Vagina (tissue), 2 donors: ENCODE measurements at regions of chr12 and their contacts with region 1.

Region 1: DNA sequence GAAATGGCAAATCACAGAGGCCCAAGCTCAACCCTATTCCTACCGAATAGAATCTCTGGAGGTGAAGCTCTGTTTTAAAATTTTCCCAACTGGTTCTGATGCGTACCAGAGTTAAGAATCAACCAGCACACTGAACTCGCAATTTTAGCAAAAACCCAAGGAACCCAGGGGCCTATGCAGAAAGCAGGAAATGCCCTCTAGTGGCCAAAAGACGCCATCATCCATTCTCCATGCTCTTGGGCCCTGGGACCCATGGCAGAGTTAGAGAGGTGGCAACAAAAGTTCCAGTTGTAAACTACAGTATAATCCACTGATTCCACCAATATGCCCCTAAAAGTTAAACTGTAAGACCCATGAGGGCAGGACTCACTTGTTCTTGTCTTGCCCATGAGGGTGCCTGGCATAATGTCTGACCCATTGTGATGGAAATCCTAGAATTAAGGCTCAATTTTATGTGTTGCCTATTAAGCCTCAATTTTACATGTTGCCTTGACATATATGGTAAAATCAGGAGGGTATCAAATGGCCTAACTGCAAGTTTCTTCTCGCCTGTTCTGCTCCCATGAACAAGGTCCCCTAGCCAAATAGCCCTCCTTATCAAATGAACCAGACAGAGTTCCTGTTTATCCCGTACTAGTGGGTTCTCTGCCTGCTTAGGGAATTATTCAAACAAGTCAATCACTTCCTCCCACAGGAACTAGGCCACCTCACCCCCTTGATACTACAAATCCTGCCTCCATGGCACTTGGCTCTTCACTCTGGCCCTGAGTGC is 137.5 kb upstream of the CPM start:
- DNase-seq: no peak
- H3K4me3 ChIP-seq: no peak overlapping the region
- H3K27ac ChIP-seq: no peak overlapping the region
- H3K4me1 ChIP-seq: no peaks in the 10 kb centered on the region
- H3K27me3 ChIP-seq: no peaks in the 10 kb centered on the region
- CTCF ChIP-seq: peak; percentile 56 to 87 (median 69)
- POLR2A ChIP-seq: no peak

Region 2: DNA sequence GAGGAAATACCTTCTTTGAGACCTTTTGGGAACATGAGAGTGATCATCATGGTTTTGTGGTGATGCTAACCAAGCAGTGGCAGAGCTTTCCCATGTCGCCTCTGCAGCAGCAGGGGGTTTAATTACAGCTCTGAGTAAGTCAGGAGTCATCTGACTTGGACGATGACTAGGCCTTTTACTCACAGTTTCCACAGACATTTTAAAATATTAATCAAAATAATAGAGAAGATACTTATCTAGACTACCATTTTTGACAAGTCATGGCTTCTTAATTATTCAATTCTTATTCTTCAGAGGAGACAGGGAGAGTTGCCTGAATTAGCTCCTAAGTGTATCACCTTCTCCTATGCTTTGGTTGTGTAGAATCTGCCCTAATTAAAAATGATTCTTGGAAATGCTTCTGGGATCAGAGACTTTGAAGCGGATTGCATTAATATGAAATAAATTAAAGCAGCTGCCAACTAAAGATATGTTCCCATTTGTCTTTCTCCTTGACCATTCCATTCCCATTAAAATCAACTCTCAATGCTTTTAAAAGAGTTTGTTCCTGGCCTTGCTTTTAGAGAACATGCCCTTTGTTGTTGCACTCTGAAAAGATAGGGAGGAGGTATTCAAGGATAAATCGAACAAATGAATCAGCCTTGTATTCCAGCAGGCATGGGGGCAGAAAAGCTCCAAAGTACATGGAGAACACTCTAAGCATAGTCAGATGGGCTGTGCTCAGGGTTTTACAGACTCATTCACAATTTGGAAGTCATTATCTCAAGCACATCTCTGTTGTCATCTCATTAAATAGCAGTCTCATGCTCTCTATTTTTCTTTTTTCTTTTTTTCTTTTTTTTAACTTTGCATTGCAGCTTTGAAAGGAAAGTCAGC is 1089.0 kb before region 1 on chr12:
- intact Hi-C with region 1: no loop called
- DNase-seq: no peak
- H3K4me3 ChIP-seq: no peak overlapping the region
- H3K27ac ChIP-seq: no peak overlapping the region
- H3K4me1 ChIP-seq: no peaks in the 10 kb centered on the region
- H3K27me3 ChIP-seq: no peaks in the 10 kb centered on the region
- CTCF ChIP-seq: no peak
- POLR2A ChIP-seq: no peak

Region 3: GRCh38 chr12:68899251-68899771 is 171.2 kb before region 1 on chr12:
- intact Hi-C with region 1: loop called (anchors 10 kb)
- DNase-seq: no peak
- H3K4me3 ChIP-seq: no peak overlapping the region
- H3K27ac ChIP-seq: no peak overlapping the region
- H3K4me1 ChIP-seq: peaks cover 5% of the 10 kb centered on the region
- H3K27me3 ChIP-seq: no peaks in the 10 kb centered on the region
- CTCF ChIP-seq: no peak
- POLR2A ChIP-seq: no peak

Region 4: DNA sequence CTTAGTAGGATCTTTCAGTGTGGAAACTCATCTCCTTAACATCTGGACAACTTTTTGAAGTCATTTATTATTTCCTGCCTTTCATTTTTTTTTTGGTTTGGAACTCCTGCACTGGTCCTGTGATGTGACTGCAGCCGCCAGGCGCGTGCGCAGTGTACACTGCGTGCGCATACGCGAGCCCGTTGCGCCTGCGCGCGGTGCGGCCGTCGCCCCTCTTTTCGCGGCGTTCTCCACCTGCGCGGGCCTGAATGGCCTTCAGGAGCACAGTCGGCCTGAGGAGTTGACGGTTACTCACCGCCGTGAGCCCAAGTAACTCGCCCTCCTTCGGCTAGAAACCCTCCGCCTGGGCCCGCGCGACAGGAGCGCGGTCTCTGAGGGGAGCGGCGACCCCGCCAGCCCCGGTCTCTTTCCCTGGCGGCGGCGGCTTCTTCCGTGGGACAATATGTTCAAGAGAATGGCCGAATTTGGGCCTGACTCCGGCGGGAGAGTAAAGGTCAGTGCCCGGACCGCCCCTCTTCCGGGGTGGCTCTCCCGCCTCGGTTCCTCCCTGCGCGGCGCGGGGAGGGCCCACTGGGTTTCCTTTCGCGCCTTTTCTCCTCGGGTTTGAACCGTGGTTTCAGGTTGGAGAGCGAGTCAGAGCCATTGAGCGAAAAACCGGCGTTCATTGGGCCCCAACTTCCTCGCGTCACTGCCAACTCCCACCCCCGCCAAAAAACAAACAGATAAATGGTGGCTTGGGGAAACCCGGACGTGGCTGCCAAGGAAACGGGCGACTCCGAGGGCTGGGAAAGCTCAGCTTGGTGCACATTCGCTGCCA is 289.2 kb after region 1 on chr12 and contains the start of gene YEATS4:
- intact Hi-C with region 1: no loop called
- DNase-seq: no peak
- H3K4me3 ChIP-seq: peak within 1 kb of the TSS; percentile 83 to 98
- H3K27ac ChIP-seq: peak within 1 kb of the TSS; percentile 97
- H3K4me1 ChIP-seq: peaks cover 15% of the 10 kb centered on the region
- H3K27me3 ChIP-seq: no peaks in the 10 kb centered on the region
- CTCF ChIP-seq: no peak
- POLR2A ChIP-seq: peak in 1 of 2 donors; percentile 50
- total RNA-seq, gene YEATS4: 6.1 TPM